H1 (cell line): ENCODE measurements at regions of chr10 and their contacts with region 1.

Region 1: GRCh38 chr10:104308439-104308903 is 29.8 kb downstream of the ITPRIP start:
- DNase-seq: no peak
- H3K4me3 ChIP-seq: no peak overlapping the region
- H3K27ac ChIP-seq: no peak overlapping the region
- H3K4me1 ChIP-seq: peaks cover 0 to 7% (median 3%) of the 10 kb centered on the region in 4 experiments; a peak in 3 of 7 replicates
- H3K27me3 ChIP-seq: no peaks in the 10 kb centered on the region
- CTCF ChIP-seq: no peak
- EP300 ChIP-seq: no peak
- POLR2A ChIP-seq: no peak
- RAD21 ChIP-seq: no peak

Region 2: GRCh38 chr10:104322416-104322782 is 13.9 kb after region 1 on chr10:
- CTCF ChIA-PET with region 1: interaction called, 65 read pairs
- POLR2A ChIA-PET with region 1: interaction called, 23 read pairs
- DNase-seq: no peak
- H3K4me3 ChIP-seq: peak overlapping the region in 1 of 4 experiments; percentile 14; a peak in 1 of 8 replicates
- H3K27ac ChIP-seq: no peak overlapping the region
- H3K4me1 ChIP-seq: peaks cover 15 to 56% (median 41%) of the 10 kb centered on the region in 4 experiments
- H3K27me3 ChIP-seq: no peaks in the 10 kb centered on the region
- CTCF ChIP-seq: no peak
- EP300 ChIP-seq: no peak
- POLR2A ChIP-seq: no peak
- RAD21 ChIP-seq: no peak

Region 3: GRCh38 chr10:104328896-104329710 is 20.6 kb after region 1 on chr10:
- CTCF ChIA-PET with region 1: interaction called, 86 read pairs
- POLR2A ChIA-PET with region 1: interaction called, 9 read pairs
- DNase-seq: no peak
- H3K4me3 ChIP-seq: peak overlapping the region in 3 of 4 experiments; percentile 17 to 44 (median 24); a peak in 5 of 8 replicates
- H3K27ac ChIP-seq: peak overlapping the region; percentile 87
- H3K4me1 ChIP-seq: peaks cover 48 to 77% (median 58%) of the 10 kb centered on the region in 4 experiments
- H3K27me3 ChIP-seq: no peaks in the 10 kb centered on the region
- CTCF ChIP-seq: no peak
- EP300 ChIP-seq: no peak
- POLR2A ChIP-seq: no peak
- RAD21 ChIP-seq: no peak

Region 4: DNA sequence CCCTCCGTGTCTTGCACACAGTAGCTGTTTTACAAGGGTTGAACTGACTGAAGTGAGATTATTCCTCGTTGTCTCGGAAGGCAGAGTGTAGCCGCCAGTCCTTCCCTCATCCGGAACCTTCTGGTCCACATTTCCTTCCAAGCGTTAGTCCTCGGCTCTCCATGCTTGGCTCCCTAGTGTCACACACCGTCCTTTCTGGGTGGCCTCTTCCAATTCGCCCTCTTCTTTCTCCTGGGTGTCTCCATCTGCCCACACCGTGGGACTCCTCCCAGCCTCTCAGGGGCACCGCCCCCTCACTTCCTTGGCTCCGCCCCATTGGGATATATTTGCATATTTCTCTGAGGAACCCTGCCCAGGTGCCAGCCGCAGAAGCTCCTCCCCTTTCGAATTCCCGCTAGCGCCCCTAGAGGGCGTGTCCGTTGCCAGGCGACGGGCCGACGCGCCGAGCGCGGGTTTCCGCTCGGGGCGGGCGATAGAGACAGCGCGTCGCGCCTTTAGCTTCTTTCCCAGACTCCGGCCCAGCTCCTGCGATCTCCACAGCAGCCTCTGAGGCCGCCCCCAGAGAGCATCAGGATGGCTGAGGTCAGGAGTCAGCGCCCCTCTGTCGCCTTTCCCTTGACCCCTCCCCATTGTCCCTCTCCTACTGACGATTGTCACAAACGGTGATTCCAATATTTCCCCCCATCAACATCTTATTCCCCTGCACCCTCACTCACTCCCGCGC is 45.0 kb after region 1 on chr10 and contains the start of gene CFAP58:
- CTCF ChIA-PET with region 1: interaction called, 166 read pairs
- POLR2A ChIA-PET with region 1: interaction called, 6 read pairs
- DNase-seq: peak; percentile 79 to 98
- H3K4me3 ChIP-seq: peak within 1 kb of the TSS; percentile 35 to 71 (median 52); a peak in 7 of 8 replicates
- H3K27ac ChIP-seq: no peak within 1 kb of the TSS
- H3K4me1 ChIP-seq: peaks cover 0 to 9% (median 1%) of the 10 kb centered on the region in 4 experiments; a peak in 2 of 7 replicates
- H3K27me3 ChIP-seq: peaks cover 5 to 13% (median 10%) of the 10 kb centered on the region in 4 experiments
- CTCF ChIP-seq: peak; percentile 67 to 80 (median 69)
- EP300 ChIP-seq: no peak
- POLR2A ChIP-seq: no peak
- RAD21 ChIP-seq: peak; percentile 12 to 27; a peak in 2 of 4 replicates
- total RNA-seq, gene CFAP58: 0.71 and 1.1 TPM in 2 replicates

Region 5: DNA sequence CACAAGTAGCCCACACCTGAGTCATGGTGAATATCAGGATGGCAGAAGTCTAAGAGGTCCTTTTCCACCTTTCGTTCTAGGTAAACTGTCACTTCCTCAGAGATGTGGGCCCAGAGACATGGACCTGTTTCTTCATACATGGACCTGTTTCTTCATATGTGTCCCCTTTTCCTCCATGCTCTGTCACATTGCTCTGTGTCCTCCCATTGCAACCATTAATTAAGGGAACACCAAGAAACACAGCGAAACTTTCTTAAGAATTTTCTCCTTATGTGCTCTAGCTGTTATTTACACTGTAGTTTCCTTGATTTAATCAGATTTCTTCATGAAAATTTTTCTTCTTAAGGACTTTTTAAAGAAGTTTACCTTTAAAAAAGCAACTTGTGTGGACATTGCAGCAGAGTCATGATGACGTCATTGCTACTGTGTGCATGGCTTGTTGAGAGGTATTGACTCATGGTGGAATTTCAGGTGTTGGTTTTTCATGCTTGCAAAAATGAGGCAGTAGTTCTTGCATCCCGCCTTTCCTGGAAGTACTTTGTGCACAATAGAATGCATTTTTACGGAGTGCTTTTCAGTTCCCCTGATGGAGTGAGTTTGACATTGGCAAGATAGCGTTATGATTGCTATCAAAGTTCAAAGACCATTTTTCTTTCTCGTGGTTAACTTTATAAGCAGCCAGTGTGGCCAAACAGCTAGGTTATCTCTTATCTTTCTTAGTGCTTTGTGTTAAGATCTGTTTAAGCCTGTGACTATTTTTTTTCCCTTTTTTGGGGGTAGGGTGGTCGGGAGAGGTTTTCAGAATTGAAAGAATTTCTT is 82.9 kb after region 1 on chr10:
- CTCF ChIA-PET with region 1: no interaction called
- POLR2A ChIA-PET with region 1: no interaction called
- DNase-seq: no peak
- H3K4me3 ChIP-seq: no peak overlapping the region
- H3K27ac ChIP-seq: no peak overlapping the region
- H3K4me1 ChIP-seq: no peaks in the 10 kb centered on the region; a peak in 1 of 7 replicates
- H3K27me3 ChIP-seq: no peaks in the 10 kb centered on the region; a peak in 1 of 7 replicates
- CTCF ChIP-seq: no peak
- EP300 ChIP-seq: no peak
- POLR2A ChIP-seq: no peak
- RAD21 ChIP-seq: no peak

Region 6: GRCh38 chr10:104589871-104590270 is 281.4 kb after region 1 on chr10:
- CTCF ChIA-PET with region 1: no interaction called
- POLR2A ChIA-PET with region 1: no interaction called
- DNase-seq: no peak
- H3K4me3 ChIP-seq: no peak overlapping the region
- H3K27ac ChIP-seq: no peak overlapping the region
- H3K4me1 ChIP-seq: peaks cover 0 to 3% (median 0%) of the 10 kb centered on the region in 4 experiments; a peak in 2 of 7 replicates
- H3K27me3 ChIP-seq: no peaks in the 10 kb centered on the region
- CTCF ChIP-seq: no peak
- EP300 ChIP-seq: no peak
- POLR2A ChIP-seq: no peak
- RAD21 ChIP-seq: no peak